HEK293 (cell line): ENCODE measurements at regions of chr17 and their contacts with region 1.

Region 1: DNA sequence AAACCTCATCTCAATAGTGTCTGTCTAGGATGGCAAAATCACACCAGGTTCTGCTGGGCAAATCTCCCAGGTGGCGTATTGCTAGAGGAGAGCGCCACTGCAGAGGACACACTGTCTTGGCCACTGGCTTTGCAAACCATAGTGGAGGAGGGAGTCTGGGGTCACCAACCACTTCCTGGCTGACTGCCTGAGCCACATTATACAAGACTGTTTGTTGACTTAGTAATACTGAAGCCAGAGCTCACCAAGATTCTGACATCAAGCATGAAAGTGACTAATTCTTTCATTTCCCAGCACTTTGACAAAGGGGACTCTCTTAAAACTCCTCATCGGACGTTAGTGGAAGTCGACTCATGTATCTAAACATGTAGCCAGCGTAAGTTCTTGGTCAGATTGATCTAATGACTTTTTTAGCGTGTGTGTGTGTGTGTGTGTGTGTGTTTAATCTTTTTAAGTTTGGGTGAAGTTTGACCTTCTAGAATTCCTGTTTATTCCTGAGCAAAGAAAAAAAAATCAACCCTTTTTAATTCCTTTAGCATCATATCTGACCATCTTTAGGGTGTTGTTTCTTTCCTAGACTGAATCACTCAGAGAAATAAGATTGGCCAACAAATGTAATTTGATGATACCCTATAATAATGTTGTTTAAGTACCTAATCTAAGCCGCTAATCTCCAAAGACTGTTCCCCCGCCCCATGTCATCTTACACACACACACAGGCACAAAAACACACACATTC is 13.7 kb downstream of the PITPNC1 start:
- H3K4me3 ChIP-seq: no peak overlapping the region
- H3K27ac ChIP-seq: peak overlapping the region; percentile 34; the same call in 1 of the 2 replicates
- H3K4me1 ChIP-seq: peaks cover 11% of the 10 kb centered on the region
- CTCF ChIP-seq: no peak

Region 2: DNA sequence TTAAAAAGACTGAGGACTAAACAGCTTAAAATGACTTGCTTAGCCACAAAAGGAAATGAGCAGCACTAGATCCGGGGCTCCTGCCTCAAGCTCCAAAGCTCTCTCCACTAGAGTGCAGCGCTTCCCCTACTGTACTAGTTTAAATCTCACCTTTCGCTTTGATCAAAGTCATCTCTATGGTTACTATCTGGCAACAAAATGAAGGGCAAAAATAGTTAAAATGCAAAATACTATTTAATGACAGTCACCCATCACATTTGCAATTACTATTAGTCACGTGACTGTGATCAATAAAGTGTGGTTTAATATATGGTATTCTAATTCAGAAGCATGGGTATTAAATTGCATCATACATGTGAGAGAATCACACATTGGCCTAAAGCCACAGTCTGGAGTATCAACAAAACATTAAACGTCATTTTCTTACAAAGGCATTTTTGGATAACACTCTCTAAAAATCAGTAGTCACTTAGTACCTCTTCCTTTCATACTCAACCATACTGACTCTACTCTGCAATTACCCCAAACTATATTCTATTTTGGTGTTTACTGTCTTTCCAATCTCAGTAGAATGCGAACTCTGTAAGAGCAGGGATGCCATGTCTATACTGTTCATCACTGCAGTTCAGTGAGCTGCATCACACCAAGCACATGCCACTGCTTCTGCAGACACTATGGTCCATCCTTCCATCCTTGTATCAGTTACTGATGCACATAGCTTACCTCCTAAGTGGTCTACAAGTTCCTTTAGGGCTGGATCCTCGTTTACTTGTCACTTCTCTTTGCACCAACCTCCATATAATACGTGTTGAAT is 30.6 kb before region 1 on chr17:
- CTCF ChIA-PET with region 1: no interaction called
- POLR2A ChIA-PET with region 1: no interaction called
- H3K4me3 ChIP-seq: no peak overlapping the region
- H3K27ac ChIP-seq: 0 out of 2 replicates have a peak overlapping the region, but pooled peaks have one; percentile 18
- H3K4me1 ChIP-seq: peaks cover 11% of the 10 kb centered on the region; the same call in 1 of the 2 replicates
- CTCF ChIP-seq: no peak

Region 3: DNA sequence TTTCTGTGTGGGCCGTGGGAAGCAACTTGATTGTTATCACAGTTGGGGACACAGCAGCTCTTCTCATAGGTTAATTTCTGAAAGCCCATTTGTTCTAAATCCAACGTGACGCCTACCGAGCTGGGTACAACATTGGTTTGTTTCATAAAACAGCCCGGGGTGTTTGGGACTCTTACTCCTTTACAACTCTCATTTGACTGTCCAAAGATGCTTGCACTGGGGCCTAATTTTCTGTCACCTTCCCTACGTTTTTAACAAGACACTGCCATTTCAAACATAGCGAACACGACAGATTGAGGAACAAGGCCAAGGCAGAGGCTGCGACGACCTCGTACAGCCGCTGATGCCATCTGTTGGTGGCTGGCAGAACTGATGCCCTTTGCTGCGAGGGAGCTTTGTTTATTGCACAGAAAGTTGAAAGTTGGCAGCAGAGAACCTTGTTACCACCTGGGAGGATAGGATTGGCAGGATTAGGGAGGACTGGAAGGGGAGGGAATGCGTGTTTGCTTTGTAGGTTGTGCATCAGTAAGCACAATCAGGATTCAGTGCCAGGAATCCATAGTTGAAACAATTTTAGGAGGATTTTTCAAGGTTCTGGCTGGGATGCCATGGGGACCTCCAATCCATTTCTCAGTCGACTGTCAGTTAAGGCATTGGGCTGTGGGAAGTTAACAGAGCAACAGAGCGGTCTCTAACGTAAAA is 84.6 kb after region 1 on chr17:
- CTCF ChIA-PET with region 1: interaction called, 68 read pairs
- POLR2A ChIA-PET with region 1: no interaction called
- H3K4me3 ChIP-seq: no peak overlapping the region
- H3K27ac ChIP-seq: no peak overlapping the region
- H3K4me1 ChIP-seq: no peaks in the 10 kb centered on the region; the same call in 1 of the 2 replicates
- CTCF ChIP-seq: peak; percentile 89

Region 4: DNA sequence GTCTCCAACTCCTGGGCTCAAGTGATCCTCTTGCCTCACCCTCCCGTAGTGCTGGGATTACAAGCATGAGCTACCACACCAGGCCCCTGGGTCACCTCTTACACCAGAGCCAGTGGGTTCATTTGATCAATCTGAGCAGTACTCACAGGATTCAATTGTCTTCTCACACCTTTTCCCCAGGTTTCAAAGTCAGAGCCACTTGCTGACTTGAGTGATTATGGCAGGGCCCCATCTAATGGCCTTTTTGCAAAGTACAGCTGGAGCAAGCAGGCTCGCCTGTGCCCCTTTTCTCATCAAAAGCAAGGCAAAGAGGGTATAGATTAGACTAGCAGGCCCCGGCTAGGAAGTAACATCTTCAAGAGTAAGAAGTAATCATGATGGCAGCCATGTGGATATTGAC is 212.1 kb after region 1 on chr17:
- CTCF ChIA-PET with region 1: interaction called, 20 read pairs
- POLR2A ChIA-PET with region 1: no interaction called
- H3K4me3 ChIP-seq: no peak overlapping the region
- H3K27ac ChIP-seq: no peak overlapping the region
- H3K4me1 ChIP-seq: peaks cover 13% of the 10 kb centered on the region
- CTCF ChIP-seq: no peak

Region 5: GRCh38 chr17:67689534-67690177 is 298.8 kb after region 1 on chr17:
- CTCF ChIA-PET with region 1: interaction called, 13 read pairs
- POLR2A ChIA-PET with region 1: no interaction called
- H3K4me3 ChIP-seq: no peak overlapping the region
- H3K27ac ChIP-seq: no peak overlapping the region
- H3K4me1 ChIP-seq: no peaks in the 10 kb centered on the region
- CTCF ChIP-seq: no peak